Heart right ventricle (tissue), 16 donors: ENCODE measurements at regions of chr9 and their contacts with region 1.

Region 1: DNA sequence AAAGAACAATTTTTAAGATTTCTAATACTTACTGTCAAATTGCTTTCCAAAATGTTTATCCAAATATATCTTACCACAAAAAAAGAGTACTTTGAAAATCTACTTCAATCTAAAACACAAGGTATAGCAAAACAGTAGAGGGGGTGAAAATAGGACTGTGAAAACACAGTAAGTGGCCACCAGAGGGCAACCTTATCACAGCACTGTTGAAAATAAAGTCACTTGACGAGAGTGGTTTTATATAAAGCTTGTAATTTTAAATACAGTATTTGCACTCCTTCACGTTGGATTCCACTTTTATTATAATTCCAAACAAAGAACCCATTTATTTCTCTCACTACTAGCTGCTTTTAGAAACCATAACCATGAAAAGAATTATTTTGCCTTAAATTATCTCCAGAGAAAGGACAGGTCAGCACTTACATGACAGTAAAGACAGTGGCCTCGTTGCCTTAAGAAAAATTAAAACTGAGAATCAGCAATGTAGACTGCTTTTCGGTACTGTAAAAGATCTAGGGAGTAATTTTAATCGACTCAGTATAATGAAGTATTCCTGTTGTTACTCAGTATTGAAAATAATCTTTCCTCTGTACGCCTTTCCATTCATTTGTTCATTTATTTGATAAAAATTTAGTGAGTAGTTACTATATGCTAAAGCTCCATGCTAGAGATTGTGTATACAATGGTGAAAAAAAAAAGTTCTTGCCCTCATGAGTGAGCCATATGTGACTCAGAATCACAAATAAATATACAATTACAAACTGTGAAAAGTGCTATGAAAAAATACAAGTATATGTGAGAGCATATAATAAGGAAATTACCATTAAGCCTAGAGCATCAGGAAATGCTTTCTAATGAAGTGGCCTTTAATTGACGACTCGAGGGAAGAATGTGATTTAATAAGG is 40.0 kb upstream of the CDK5RAP2 start:
- DNase-seq: peak in 1 of 2 donors; percentile 44
- ATAC-seq: peak in 7 of 8 donors; percentile 47 to 84 (median 79)
- H3K4me3 ChIP-seq: no peak overlapping the region
- H3K27ac ChIP-seq: no peak overlapping the region
- H3K4me1 ChIP-seq: peaks cover 0 to 9% (median 0%) of the 10 kb centered on the region in 9 donors
- H3K27me3 ChIP-seq: no peaks in the 10 kb centered on the region
- CTCF ChIP-seq: peak; percentile 64 to 91 (median 88)

Region 2: DNA sequence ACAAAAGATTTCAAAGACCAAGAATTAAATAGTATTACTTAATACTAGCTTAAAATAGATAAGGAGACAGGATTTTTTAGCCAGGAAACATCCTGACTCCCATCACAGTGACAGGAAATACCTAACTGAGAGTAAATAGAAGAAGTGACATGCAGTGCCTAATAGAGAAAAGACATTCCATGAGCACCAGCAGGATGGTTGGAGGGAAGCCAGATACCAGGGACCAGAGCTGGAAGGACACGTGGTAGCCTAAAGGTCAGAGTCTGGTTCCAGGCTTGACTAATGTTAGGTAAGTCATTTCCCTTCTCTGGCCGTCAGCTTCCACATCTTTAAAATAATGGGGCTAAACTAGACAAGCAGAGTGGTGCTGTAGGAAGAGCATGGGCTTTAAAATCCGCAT is 81.7 kb before region 1 on chr9:
- intact Hi-C with region 1: no loop called
- DNase-seq: peak in 1 of 2 donors; percentile 28
- ATAC-seq: peak in 5 of 8 donors; percentile 47 to 71 (median 53)
- H3K4me3 ChIP-seq: no peak overlapping the region
- H3K27ac ChIP-seq: peak overlapping the region in 1 of 10 donors; percentile 41
- H3K4me1 ChIP-seq: peaks cover 0 to 13% (median 0%) of the 10 kb centered on the region in 9 donors
- H3K27me3 ChIP-seq: no peaks in the 10 kb centered on the region
- CTCF ChIP-seq: no peak

Region 3: GRCh38 chr9:120714088-120714845 is 94.3 kb after region 1 on chr9 and contains the start of gene MEGF9:
- intact Hi-C with region 1: loop called in 4 of 10 experiments (anchors 5 to 10 kb)
- DNase-seq: peak; percentile 98
- ATAC-seq: peak; percentile 97 to 99 (median 99)
- H3K4me3 ChIP-seq: peak within 1 kb of the TSS; percentile 48 to 97 (median 84)
- H3K27ac ChIP-seq: peak within 1 kb of the TSS; percentile 31 to 93 (median 80)
- H3K4me1 ChIP-seq: peaks cover 4 to 50% (median 38%) of the 10 kb centered on the region in 9 donors
- H3K27me3 ChIP-seq: no peaks in the 10 kb centered on the region
- CTCF ChIP-seq: peak in 1 of 9 donors; percentile 7
- total RNA-seq, gene MEGF9: 5.2 to 39.1 (median 9.6) TPM

Region 4: DNA sequence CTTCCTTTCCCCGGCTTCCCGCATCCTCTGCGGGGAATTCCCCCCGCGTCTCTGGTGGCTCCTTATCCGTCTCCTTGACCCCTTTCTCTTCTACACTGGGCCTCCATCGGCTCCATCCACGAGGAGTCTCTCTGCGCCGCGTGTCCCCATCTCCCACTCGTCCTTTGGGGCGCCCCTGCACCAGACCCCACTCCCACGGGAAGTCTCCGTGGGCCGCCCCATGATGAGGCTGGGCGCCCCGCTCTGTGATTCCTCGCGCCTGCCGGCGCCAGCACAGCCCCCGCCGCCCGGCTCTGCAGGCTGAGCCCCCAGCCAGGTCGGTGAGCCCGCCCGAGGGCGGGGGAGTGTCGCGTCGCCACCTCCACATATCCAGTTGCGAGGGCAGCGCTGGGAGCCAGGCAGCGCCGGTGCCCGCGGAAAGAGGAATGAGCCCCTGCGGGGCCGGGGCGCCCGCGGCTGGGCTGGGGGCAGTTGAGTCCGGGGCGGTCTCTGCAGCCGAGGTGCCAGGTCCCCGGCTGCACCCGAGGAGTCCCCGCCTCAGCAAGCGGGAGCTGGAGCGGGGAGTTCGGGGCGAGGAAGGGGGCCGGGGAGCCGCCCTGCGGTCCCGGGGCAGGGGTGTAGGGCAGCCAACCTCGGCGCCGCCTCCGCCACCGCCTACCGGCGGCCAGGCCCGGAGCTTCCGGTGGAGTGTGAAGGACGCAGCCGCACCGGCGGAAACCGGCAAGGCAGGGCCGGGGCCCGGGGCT is 308.7 kb after region 1 on chr9:
- intact Hi-C with region 1: no loop called
- DNase-seq: peak; percentile 73 to 84
- ATAC-seq: peak; percentile 87 to 96 (median 90)
- H3K4me3 ChIP-seq: peak overlapping the region; percentile 52 to 76 (median 72)
- H3K27ac ChIP-seq: peak overlapping the region; percentile 76 to 95 (median 92)
- H3K4me1 ChIP-seq: peaks cover 5 to 83% (median 35%) of the 10 kb centered on the region in 9 donors
- H3K27me3 ChIP-seq: no peaks in the 10 kb centered on the region
- CTCF ChIP-seq: peak in 7 of 9 donors; percentile 14 to 46 (median 32)